ENCODE measurements at regions of chr22 and their contacts with region 1.

Region 1: GRCh38 chr22:31970490-31971444 is 26.4 kb downstream of the YWHAH start:
- DNase-seq: peak; percentile 93
- ATAC-seq: peak; percentile 92
- H3K4me3 Mint-ChIP-seq: peak overlapping the region; percentile 91
- H3K27ac Mint-ChIP-seq: no peak overlapping the region
- H3K4me1 Mint-ChIP-seq: peaks cover 3% of the 10 kb centered on the region; the same call in 1 of the 2 replicates
- H3K27me3 Mint-ChIP-seq: peaks cover 6% of the 10 kb centered on the region; the same call in 1 of the 2 replicates
- CTCF ChIP-seq: peak; percentile 98

Region 2: DNA sequence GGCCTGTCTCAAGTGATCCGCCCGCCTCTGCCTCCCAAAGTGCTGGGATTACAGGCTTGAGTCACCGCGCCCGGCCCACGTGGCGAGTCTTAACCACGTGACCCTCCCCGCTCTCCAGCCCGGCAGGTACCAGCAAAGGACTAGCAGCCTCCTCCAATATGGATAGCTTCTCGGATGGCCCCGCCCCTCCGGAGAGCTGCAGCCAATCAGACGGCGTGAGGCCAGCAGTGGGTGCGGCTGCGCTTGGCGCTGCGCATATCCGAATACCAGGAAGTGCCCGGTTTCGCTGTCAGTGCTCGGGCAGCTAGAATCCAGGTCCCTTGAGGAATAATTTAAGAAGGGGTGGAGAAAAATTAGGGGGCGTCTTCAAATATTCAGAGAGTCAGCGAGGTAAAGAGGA is 294.1 kb before region 1 on chr22:
- CTCF ChIA-PET with region 1: interaction called, 32 read pairs
- POLR2A ChIA-PET with region 1: no interaction called
- DNase-seq: peak; percentile 94
- ATAC-seq: peak; percentile 100
- H3K4me3 Mint-ChIP-seq: peak overlapping the region; percentile 68
- H3K27ac Mint-ChIP-seq: peak overlapping the region; percentile 34; the same call in 1 of the 2 replicates
- H3K4me1 Mint-ChIP-seq: no peaks in the 10 kb centered on the region; the same call in 1 of the 2 replicates
- H3K27me3 Mint-ChIP-seq: peaks cover 12% of the 10 kb centered on the region
- CTCF ChIP-seq: no peak

Region 3: DNA sequence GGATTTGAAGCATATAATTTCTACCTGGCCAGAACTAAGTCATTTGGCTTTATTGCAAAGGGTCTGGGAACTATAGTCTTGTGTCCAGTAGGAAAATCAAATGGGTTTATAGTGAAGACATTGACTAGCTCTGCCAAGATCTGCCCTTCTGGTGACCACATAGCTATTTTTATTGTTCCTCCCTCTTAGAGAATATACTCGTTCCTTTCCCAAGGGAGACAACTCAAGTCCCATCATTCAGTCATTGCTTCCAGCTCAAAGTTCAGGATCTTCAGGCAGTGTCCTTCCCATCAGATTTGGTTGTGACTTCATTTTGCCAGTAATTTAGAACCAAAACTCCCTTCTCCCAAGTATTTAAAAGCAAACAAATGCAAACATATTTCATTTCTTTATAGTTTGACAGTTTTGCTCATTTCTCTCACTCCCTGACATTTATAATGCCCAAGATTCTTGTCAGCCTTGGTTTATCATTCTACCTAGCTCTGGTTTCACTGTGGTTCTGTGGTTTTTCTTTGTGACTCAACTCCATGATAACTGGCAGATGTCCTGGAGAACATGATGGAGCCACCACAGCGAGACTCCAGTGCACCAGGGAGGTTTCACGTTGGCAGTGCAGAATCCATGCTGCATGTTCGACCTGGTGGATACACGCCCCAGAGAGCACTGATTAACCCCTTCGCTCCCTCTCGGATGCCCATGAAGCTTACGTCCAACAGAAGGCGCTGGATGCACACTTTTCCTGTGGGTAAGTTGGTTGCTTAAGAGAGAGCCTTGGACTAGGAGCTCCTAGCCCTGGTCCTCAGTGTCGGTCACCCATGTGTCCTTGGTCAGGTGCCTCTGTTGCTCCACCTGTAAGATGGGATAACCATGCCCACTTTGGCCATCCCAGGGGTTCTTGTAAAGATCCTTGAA is 152.0 kb before region 1 on chr22:
- CTCF ChIA-PET with region 1: interaction called, 19 read pairs
- POLR2A ChIA-PET with region 1: no interaction called
- DNase-seq: peak; percentile 18
- ATAC-seq: no peak
- H3K4me3 Mint-ChIP-seq: no peak overlapping the region
- H3K27ac Mint-ChIP-seq: no peak overlapping the region
- H3K4me1 Mint-ChIP-seq: no peaks in the 10 kb centered on the region
- H3K27me3 Mint-ChIP-seq: no peaks in the 10 kb centered on the region
- CTCF ChIP-seq: no peak

Region 4: DNA sequence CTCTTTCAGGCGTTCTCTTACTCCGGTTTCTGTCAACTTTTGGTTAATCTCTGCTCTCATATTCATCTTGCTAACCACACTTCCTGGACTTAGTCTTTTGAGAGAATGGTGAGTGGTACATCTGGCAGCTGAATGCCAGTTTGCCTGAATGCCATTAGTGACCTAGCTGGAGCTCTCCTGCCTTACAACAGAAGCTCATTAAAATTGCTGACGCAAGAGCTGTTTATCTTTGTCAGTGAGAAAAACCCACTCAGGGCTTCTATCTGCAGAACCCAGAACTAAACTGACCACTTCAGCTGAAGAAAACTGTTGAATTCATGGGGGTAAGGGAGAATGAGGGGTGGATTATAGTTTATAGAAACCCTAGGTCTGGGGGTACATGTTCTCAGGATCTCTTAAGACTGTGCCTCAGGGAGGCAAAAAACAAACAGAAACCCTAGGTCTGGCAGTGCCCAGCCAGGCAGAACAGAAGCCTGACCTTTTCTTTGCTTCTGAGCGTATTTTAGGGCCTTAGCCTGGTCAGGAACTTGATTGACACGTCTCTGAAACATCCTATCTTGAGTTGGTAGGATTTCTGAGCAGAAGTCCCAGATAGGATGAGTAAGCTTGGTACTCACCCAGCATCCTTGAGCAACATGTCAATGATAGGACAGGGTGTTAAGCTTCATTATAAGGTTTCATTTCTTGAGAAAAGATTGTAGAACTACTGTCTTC is 79.2 kb before region 1 on chr22:
- CTCF ChIA-PET with region 1: interaction called, 13 read pairs
- POLR2A ChIA-PET with region 1: no interaction called
- DNase-seq: no peak
- ATAC-seq: peak; percentile 38
- H3K4me3 Mint-ChIP-seq: no peak overlapping the region
- H3K27ac Mint-ChIP-seq: peak overlapping the region; percentile 79
- H3K4me1 Mint-ChIP-seq: peaks cover 11% of the 10 kb centered on the region
- H3K27me3 Mint-ChIP-seq: no peaks in the 10 kb centered on the region
- CTCF ChIP-seq: no peak

Region 5: GRCh38 chr22:31954535-31955523 is 15.9 kb before region 1 on chr22:
- CTCF ChIA-PET with region 1: interaction called, 107 read pairs
- POLR2A ChIA-PET with region 1: no interaction called
- DNase-seq: no peak
- ATAC-seq: no peak
- H3K4me3 Mint-ChIP-seq: no peak overlapping the region
- H3K27ac Mint-ChIP-seq: peak overlapping the region; percentile 7
- H3K4me1 Mint-ChIP-seq: peaks cover 56% of the 10 kb centered on the region
- H3K27me3 Mint-ChIP-seq: no peaks in the 10 kb centered on the region
- CTCF ChIP-seq: no peak

Region 6: GRCh38 chr22:32066820-32067219 is 96.1 kb after region 1 on chr22:
- CTCF ChIA-PET with region 1: interaction called, 22 read pairs
- POLR2A ChIA-PET with region 1: no interaction called
- DNase-seq: peak; percentile 23
- ATAC-seq: peak; percentile 32; the same call in 1 of the 2 replicates
- H3K4me3 Mint-ChIP-seq: no peak overlapping the region
- H3K27ac Mint-ChIP-seq: no peak overlapping the region
- H3K4me1 Mint-ChIP-seq: peaks cover 4% of the 10 kb centered on the region
- H3K27me3 Mint-ChIP-seq: peaks cover 9% of the 10 kb centered on the region
- CTCF ChIP-seq: no peak

Region 7: GRCh38 chr22:32202539-32203180 is 231.9 kb after region 1 on chr22:
- CTCF ChIA-PET with region 1: interaction called, 11 read pairs
- POLR2A ChIA-PET with region 1: no interaction called
- DNase-seq: peak; percentile 63
- ATAC-seq: peak; percentile 27
- H3K4me3 Mint-ChIP-seq: peak overlapping the region; percentile 82
- H3K27ac Mint-ChIP-seq: no peak overlapping the region
- H3K4me1 Mint-ChIP-seq: peaks cover 55% of the 10 kb centered on the region
- H3K27me3 Mint-ChIP-seq: peaks cover 60% of the 10 kb centered on the region
- CTCF ChIP-seq: peak; percentile 37

Region 8: DNA sequence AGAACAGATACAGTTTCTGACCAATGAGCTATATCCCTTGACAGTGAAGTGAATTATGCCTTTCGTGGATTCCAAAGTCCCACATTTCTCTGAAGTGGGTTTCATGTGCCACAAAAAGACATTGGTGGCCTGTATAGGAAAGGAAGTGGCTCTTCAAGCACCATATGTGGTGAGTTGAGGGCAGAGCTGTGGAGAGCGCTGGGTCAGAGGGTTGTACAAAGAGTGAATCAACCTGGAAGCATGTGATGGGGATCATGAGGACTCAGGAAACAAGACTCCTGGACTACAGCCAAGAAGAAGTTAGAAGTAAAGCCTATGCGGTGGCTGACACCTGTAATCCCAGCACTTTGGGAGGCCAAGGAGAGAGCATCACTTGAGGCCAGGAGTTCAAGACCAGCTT is 285.0 kb after region 1 on chr22:
- CTCF ChIA-PET with region 1: no interaction called
- POLR2A ChIA-PET with region 1: no interaction called
- DNase-seq: no peak
- ATAC-seq: no peak
- H3K4me3 Mint-ChIP-seq: no peak overlapping the region
- H3K27ac Mint-ChIP-seq: no peak overlapping the region
- H3K4me1 Mint-ChIP-seq: peaks cover 2% of the 10 kb centered on the region; the same call in 1 of the 2 replicates
- H3K27me3 Mint-ChIP-seq: peaks cover 2% of the 10 kb centered on the region; the same call in 1 of the 2 replicates
- CTCF ChIP-seq: no peak

Measured in WTC11 (cell line).